HepG2 (cell line): ENCODE measurements at regions of chr14 and their contacts with region 1.

Region 1: DNA sequence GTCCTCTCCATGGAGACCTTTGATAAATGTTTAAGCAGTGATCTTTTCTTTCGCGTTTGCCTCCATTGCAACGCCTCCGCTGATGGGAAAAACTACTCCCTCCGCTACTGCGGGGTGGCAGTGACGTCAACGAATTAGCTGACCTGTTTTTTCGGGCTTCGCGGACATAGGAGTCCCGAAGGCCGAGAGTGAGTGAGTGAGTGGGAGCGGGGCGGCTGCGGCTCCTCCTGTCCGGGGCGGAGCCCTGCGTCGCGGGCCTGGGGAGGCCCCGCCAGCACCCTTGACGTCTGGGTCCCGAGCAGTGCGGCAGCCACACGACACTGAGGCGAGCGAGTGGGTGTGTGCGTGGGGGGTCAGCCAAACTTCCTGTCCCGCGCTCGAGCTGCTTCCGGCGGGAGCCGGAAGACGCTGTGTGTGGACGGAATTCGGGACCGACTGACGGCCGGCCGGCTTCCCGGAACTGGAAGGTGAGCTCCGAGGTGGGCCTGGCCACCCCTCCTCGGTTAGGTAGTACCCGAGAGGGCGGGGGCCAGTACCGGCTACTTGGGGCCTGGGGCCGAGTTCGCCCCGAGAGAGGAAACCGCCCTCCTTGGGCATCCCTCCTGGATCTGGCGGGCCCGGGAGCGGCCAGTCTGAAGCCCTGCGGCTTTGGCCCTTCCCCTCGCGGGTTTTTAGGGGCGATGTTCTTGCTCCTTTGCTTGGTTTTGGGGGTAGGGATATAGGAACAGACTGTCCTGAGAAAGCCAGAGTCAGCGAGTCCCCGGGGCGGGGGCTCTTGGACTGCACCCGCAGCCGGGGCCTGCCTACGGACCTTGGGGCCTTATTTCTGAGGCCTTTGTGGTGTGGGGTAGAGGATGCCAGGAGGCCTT is at the start of gene ZNF410:
- DNase-seq: peak; percentile 90
- ATAC-seq: peak; percentile 98
- H3K4me3 ChIP-seq: peak within 1 kb of the TSS; percentile 65 to 99 (median 90)
- H3K27ac ChIP-seq: peak within 1 kb of the TSS; percentile 88
- H3K4me1 ChIP-seq: peaks cover 35% of the 10 kb centered on the region
- H3K27me3 ChIP-seq: no peaks in the 10 kb centered on the region
- CTCF ChIP-seq: peak; percentile 27; the same call in 1 of the 2 replicates
- EP300 ChIP-seq: no peak
- POLR2A ChIP-seq: peak; percentile 63 to 91
- RAD21 ChIP-seq: peak; percentile 13; the same call in 1 of the 2 replicates
- total RNA-seq, gene ZNF410: 44.3 and 55.2 TPM in 2 replicates

Region 2: GRCh38 chr14:73633116-73634010 is 253.3 kb before region 1 on chr14:
- CTCF ChIA-PET with region 1: no interaction called
- POLR2A ChIA-PET with region 1: no interaction called
- in situ Hi-C with region 1: no loop called
- intact Hi-C with region 1: no loop called
- DNase-seq: peak; percentile 59
- ATAC-seq: peak; percentile 88
- H3K4me3 ChIP-seq: peak overlapping the region; percentile 49 to 68 (median 51)
- H3K27ac ChIP-seq: no peak overlapping the region
- H3K4me1 ChIP-seq: peaks cover 32% of the 10 kb centered on the region
- H3K27me3 ChIP-seq: no peaks in the 10 kb centered on the region
- CTCF ChIP-seq: peak; percentile 83
- EP300 ChIP-seq: no peak
- POLR2A ChIP-seq: no peak
- RAD21 ChIP-seq: peak; percentile 81

Region 3: GRCh38 chr14:73833530-73834257 is 53.0 kb before region 1 on chr14:
- CTCF ChIA-PET with region 1: no interaction called
- POLR2A ChIA-PET with region 1: interaction called, 5 read pairs
- in situ Hi-C with region 1: no loop called
- intact Hi-C with region 1: loop called (anchors 5 kb)
- DNase-seq: peak; percentile 60
- ATAC-seq: peak; percentile 53
- H3K4me3 ChIP-seq: peak overlapping the region in 2 of 3 experiments; percentile 14 to 25; a peak in 4 of 6 replicates
- H3K27ac ChIP-seq: no peak overlapping the region
- H3K4me1 ChIP-seq: peaks cover 69% of the 10 kb centered on the region
- H3K27me3 ChIP-seq: peaks cover 0 to 2% of the 10 kb centered on the region in 2 experiments; a peak in 2 of 5 replicates
- CTCF ChIP-seq: no peak
- EP300 ChIP-seq: peak in 1 of 2 experiments; percentile 31; a peak in 1 of 4 replicates
- POLR2A ChIP-seq: no peak
- RAD21 ChIP-seq: no peak